HEK293 (cell line): ENCODE measurements at regions of chr6 and their contacts with region 1.

Region 1: GRCh38 chr6:142944124-142945066 is 581 bp downstream of the HIVEP2 start:
- H3K4me3 ChIP-seq: peak overlapping the region; percentile 78
- H3K27ac ChIP-seq: peak overlapping the region; percentile 97
- H3K4me1 ChIP-seq: peaks cover 19% of the 10 kb centered on the region
- CTCF ChIP-seq: no peak

Region 2: DNA sequence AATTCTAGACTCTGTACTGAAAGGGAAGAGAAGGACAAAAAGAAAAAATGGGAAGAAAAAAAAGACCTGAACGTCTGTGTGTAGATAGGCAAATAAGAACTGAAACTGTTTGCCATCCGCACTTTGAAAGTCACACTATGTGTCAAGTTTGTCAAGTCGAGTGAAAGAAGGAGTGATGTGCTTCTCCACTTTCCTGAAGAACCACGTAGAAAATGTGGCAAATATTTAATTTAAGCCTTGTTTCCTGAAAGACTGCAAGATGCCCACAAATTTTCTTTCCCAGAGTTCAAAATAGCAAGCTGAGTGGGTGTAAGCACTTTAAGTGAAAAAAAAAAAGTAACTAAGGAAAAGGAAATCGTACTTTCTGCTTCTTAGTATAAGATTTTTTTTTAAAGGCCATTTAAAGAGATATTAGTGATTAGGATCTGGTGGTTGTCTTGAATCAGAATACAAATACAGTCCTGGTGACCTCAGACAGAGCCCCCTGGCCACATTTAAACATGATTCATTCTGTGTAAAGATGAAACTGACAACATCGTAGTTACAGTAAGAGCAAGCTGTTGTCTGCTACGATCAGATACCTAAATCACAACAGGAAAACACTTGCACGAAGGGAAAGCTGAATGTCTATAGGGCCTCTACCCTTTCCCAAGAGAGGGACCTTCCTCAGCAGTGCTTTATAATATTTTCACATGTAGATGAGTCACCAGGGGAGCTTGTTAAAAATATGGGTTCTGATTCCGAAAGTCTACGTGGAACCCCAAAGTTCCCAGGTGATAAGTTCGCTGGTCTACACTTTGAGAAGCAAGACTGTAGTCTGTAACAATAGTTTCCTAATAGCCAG is 101.8 kb before region 1 on chr6:
- CTCF ChIA-PET with region 1: no interaction called
- POLR2A ChIA-PET with region 1: no interaction called
- H3K4me3 ChIP-seq: no peak overlapping the region
- H3K27ac ChIP-seq: no peak overlapping the region
- H3K4me1 ChIP-seq: peaks cover 34% of the 10 kb centered on the region
- CTCF ChIP-seq: no peak

Region 3: DNA sequence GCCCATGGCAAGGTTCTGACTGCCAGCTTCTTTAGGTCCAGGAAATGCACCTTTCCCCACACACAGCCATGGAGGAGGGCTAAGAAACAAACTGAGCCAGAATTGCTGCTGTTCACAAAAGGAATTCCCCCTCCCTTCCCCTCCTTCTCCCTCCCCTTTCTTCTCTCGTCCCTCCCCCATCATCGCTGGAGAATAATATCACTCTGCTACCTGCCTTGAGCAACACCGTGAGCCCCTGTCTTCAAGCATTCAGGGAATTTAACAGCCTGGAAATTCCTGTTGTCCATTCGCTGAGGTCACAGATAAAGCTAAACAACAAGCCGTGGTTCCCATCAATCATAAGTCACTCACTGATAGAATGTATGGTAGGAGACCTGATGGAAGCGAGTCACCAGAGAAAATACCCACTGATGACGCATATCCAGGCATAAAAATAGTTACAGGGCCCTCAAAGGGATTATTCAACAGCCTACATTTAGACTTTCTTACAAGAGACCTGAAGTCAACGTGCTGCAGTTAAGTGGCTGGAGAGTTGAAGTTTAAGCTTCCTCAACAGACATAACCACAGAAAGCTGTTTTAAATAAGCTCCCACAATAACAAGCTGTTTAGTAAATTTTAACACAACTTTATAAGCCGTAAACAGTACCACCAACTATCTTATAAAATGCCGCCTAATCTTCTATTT is 59.1 kb before region 1 on chr6:
- CTCF ChIA-PET with region 1: interaction called, 12 read pairs
- POLR2A ChIA-PET with region 1: interaction called, 5 read pairs
- H3K4me3 ChIP-seq: peak overlapping the region; percentile 24
- H3K27ac ChIP-seq: peak overlapping the region; percentile 32; the same call in 1 of the 2 replicates
- H3K4me1 ChIP-seq: peaks cover 11% of the 10 kb centered on the region
- CTCF ChIP-seq: no peak

Region 4: DNA sequence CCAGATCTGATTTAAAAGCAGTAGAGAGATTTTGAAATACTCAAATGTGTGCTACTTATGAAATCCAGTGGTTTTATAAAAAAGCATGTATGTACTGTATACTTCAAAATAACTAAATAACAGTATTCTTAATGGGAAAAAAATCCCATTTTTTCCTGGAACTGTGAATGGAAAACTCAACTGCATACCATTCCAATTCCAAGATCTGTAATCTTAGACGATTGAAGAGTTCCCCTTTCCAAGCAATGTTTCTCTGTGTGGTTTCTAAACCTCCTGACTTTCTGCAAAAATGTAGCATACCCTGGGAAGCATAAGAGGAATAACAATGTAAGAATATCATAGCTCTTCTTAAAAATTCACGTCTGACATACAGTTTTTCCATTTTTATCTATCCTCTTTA is 40.9 kb after region 1 on chr6:
- CTCF ChIA-PET with region 1: no interaction called
- POLR2A ChIA-PET with region 1: no interaction called
- H3K4me3 ChIP-seq: no peak overlapping the region
- H3K27ac ChIP-seq: no peak overlapping the region
- H3K4me1 ChIP-seq: no peaks in the 10 kb centered on the region
- CTCF ChIP-seq: no peak

Region 5: GRCh38 chr6:143187238-143187923 is 243.0 kb after region 1 on chr6:
- CTCF ChIA-PET with region 1: no interaction called
- POLR2A ChIA-PET with region 1: no interaction called
- H3K4me3 ChIP-seq: no peak overlapping the region
- H3K27ac ChIP-seq: no peak overlapping the region
- H3K4me1 ChIP-seq: no peaks in the 10 kb centered on the region
- CTCF ChIP-seq: no peak